AG04450 (cell line): ENCODE measurements at regions of chr22 and their contacts with region 1.

Region 1: DNA sequence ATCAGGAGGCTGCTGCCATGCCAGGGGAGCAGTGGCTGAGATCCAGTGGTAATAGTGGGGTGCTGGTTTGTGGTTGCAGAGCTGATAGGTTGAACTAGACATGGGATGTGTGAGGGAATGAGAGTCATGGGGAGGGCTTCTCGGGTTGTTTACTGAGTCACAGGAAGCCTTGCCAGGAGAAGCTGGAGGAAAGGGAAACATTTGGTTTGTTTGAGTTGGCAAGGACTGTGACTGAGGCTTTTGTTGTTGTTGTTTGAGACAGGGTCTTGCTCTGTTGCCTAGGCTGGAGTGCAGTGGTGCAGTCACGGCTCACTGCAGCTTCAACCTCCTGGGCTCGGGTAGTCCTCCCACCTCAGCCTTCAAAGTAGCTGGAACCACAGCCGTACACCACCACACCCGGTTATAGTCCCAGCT is 49.3 kb downstream of the CABIN1 start:
- DNase-seq: peak; percentile 76
- H3K4me3 ChIP-seq: no peak overlapping the region
- H3K27ac ChIP-seq: peak overlapping the region; percentile 93
- H3K27me3 ChIP-seq: no peaks in the 10 kb centered on the region
- CTCF ChIP-seq: no peak

Region 2: DNA sequence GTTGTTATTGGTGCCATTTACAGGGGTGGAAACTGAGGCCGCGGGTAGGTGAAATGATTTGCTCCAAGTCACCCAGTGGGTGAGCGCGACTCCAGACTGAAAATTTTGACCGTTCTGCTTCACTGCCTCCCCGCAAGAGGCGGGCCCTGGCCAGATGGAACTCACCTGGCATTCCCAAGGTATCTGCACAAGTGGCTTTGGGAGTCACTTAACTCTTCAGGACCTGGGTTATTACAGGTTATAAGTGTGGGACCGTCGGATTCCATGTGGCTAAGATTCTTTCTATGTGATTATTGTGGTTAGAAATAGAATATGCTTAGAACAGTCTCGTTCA is 48.7 kb before region 1 on chr22:
- CTCF ChIA-PET with region 1: no interaction called
- POLR2A ChIA-PET with region 1: interaction called, 13 read pairs
- DNase-seq: no peak
- H3K4me3 ChIP-seq: peak overlapping the region; percentile 93
- H3K27ac ChIP-seq: no peak overlapping the region
- H3K27me3 ChIP-seq: peaks cover 4% of the 10 kb centered on the region
- CTCF ChIP-seq: no peak

Region 3: GRCh38 chr22:24046024-24046423 is 14.4 kb before region 1 on chr22:
- CTCF ChIA-PET with region 1: no interaction called
- POLR2A ChIA-PET with region 1: no interaction called
- DNase-seq: no peak
- H3K4me3 ChIP-seq: no peak overlapping the region
- H3K27ac ChIP-seq: no peak overlapping the region
- H3K27me3 ChIP-seq: no peaks in the 10 kb centered on the region
- CTCF ChIP-seq: no peak

Region 4: DNA sequence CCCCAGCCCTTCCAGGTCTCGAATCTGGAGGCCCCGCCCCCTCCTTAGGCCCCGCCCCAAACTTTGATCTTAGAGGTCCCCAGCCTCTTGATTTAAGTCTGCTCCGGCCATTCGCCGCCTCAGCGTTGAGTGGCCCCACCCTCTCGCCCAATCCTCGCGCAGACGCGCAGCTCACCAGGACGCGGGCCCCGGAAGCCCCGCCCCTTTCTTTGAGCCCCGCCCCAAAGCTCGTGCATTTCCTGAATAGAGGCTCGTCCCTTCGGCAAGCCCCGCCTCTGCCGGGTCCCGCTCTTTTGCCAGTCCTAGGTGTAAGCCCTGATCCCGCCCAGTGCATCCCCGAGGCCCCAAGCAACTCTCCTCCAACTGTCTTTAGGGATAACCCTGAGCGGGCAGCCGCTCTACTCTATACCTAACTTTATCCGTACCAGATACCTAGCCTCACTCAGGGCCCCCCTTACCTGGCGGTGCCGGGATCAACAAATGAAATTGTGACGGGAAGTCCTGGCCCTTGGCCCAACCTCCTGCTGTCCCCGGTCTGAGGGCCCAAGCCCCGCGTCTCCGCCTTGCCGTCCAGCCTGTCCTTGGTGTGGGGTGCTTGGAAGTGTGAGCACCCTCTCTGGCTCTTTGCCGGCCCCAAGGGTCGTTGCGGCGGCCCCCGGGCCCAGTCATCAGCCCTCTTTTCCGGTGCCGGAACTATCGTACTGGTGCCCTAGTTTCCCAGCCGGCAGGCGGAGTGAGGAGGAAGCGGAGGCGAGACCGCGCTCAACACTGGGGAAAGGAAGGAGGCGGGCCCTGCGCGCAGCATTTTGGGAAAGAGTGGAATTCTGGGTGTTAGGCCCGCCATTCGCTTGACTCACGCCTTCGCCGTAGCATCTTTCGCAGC is 495.0 kb after region 1 on chr22 and contains the start of gene SNRPD3:
- CTCF ChIA-PET with region 1: no interaction called
- POLR2A ChIA-PET with region 1: no interaction called
- DNase-seq: peak; percentile 97
- H3K4me3 ChIP-seq: peak within 1 kb of the TSS; percentile 96
- H3K27ac ChIP-seq: peak within 1 kb of the TSS; percentile 92
- H3K27me3 ChIP-seq: no peaks in the 10 kb centered on the region
- CTCF ChIP-seq: peak; percentile 37
- polyA plus RNA-seq, gene SNRPD3: 187 and 238 TPM in 2 replicates